ENCODE measurements at regions of chr14 and their contacts with region 1.

Region 1: GRCh38 chr14:63641473-63642228 is at the start of gene WDR89:
- DNase-seq: peak; percentile 97 to 99
- ATAC-seq: peak; percentile 99
- H3K4me3 ChIP-seq: peak within 1 kb of the TSS; percentile 54 to 88
- H3K27ac ChIP-seq: peak within 1 kb of the TSS; percentile 57 to 64
- H3K4me1 ChIP-seq: no peaks in the 10 kb centered on the region
- H3K27me3 ChIP-seq: no peaks in the 10 kb centered on the region
- total RNA-seq, gene WDR89: 7.9 to 12.9 TPM

Region 2: GRCh38 chr14:63388763-63389431 is 252.8 kb before region 1 on chr14:
- intact Hi-C with region 1: loop called in 1 of 2 experiments (anchors 5 kb)
- DNase-seq: peak; percentile 65 to 88
- ATAC-seq: peak; percentile 82
- H3K4me3 ChIP-seq: no peak overlapping the region
- H3K27ac ChIP-seq: no peak overlapping the region
- H3K4me1 ChIP-seq: no peaks in the 10 kb centered on the region
- H3K27me3 ChIP-seq: no peaks in the 10 kb centered on the region

Region 3: DNA sequence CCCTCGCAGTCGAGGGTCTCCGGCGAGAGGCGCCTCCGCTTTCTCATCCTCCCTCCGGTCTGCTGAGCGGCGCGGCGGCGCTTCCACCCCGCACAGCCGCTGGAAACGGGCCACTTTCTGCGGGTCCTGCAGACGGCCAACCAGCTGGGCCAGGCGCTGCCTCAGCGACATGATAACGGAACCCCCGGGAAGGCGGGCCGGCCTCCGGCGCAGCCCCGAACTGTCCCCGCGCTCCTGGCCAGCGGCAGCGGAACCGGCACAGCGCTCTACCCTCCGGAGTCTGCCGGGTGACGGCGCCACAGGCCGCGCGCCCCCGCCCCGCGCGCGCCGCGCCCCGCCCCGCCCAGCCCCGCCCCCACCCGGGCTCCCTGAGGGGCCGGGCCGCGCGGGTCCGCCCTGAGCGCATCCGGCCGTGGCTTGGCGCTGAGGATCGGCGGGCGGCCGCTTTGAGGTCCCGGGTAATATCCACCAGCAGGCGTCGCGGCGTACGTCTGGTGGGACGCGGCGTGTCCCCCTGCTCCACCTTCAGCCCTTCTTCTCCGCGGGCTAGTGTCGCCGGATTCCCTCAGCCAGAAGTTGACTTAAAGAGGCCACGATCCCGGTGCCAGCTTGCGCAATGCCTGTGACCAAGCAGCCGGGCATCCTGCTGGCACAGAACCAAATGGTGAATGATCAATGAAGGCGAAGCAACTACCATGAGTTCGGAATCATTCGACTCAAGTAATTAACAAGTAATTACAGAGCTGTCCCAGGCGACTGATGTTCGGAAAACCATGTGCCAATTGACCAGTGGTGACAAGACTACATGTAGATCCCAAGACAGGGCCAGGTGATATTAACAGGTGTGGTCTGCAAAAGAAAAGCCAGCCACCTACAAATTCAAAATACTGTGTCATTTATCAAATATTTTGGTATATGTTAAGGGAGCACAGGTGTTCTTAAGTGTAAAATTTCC is 86.4 kb after region 1 on chr14 and contains the start of gene SGPP1:
- intact Hi-C with region 1: loop called in 1 of 2 experiments (anchors 5 kb)
- DNase-seq: peak; percentile 89 to 92
- ATAC-seq: peak; percentile 91
- H3K4me3 ChIP-seq: peak within 1 kb of the TSS; percentile 96 to 97
- H3K27ac ChIP-seq: peak within 1 kb of the TSS in 1 of 2 donors; percentile 55
- H3K4me1 ChIP-seq: no peaks in the 10 kb centered on the region
- H3K27me3 ChIP-seq: no peaks in the 10 kb centered on the region
- total RNA-seq, gene SGPP1: 14.4 to 17.5 TPM

Measured in aorta (tissue), 5 donors.